B cell (primary cell): ENCODE measurements at regions of chr15 and their contacts with region 1.

Region 1: DNA sequence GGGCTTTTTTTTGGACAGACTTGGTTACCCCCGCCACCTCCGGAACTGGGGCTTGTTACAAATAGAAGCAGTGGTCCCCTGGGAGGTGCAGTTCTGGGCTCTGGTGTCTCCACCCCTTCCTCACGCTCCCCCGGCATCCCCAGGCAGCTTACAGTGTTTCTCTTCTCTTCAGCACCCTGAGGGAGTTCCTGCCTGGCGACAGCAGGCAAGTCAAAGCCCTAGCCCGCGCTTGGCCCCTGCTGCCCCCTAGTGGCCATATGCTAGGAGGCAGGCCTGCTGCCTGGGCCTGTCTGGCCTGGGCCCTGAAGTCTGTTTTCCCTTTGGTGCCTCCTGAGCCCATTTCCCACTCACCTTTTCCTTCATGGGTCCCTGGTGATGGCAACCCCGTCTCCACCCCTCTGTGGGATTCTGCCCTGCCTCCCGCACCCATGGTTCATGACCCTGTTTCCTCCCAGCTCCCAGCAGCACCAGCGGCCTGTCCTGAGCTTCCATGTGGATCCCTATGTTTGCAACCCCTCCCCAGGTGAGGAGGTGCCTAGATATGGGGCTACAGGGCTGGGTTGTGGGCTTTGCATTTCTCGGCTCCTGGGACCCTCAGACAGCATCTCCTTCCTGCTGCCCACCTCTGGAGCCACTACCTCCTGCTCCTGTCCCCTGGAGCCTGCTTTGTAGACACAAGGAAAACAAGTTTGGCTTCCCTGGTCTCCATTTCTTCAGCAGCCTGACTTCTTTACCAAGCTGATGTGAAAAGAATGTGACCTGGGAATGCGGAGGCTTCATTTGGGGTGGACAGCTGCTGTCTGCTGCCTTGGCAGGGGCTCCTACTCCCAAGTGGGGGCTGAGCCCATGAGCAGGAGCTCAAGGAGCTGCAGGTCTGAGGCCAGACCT is 2.2 kb downstream of the SNX22 start:
- DNase-seq: peak; percentile 97
- ATAC-seq: peak; percentile 82
- H3K4me3 ChIP-seq: peak overlapping the region in 4 of 5 experiments; percentile 91 to 96 (median 94)
- H3K4me3 Mint-ChIP-seq: peak overlapping the region; percentile 90
- H3K27ac ChIP-seq: peak overlapping the region; percentile 79 to 83
- H3K27ac Mint-ChIP-seq: peak overlapping the region; percentile 94
- H3K4me1 ChIP-seq: peaks cover 34 to 67% of the 10 kb centered on the region in 2 donors
- H3K4me1 Mint-ChIP-seq: peaks cover 76% of the 10 kb centered on the region
- H3K27me3 ChIP-seq: no peaks in the 10 kb centered on the region
- H3K27me3 Mint-ChIP-seq: no peaks in the 10 kb centered on the region
- CTCF ChIP-seq: peak; percentile 92

Region 2: GRCh38 chr15:63833021-63833696 is 320.6 kb before region 1 on chr15:
- CTCF ChIA-PET with region 1: no interaction called
- POLR2A ChIA-PET with region 1: no interaction called
- intact Hi-C with region 1: loop called (anchors 5 kb)
- DNase-seq: no peak
- ATAC-seq: peak; percentile 39
- H3K4me3 ChIP-seq: peak overlapping the region; percentile 83 to 95 (median 93)
- H3K4me3 Mint-ChIP-seq: peak overlapping the region; percentile 91
- H3K27ac ChIP-seq: peak overlapping the region; percentile 90
- H3K27ac Mint-ChIP-seq: peak overlapping the region; percentile 87
- H3K4me1 ChIP-seq: peaks cover 22 to 27% of the 10 kb centered on the region in 2 donors
- H3K4me1 Mint-ChIP-seq: peaks cover 39% of the 10 kb centered on the region
- H3K27me3 ChIP-seq: no peaks in the 10 kb centered on the region
- H3K27me3 Mint-ChIP-seq: no peaks in the 10 kb centered on the region
- CTCF ChIP-seq: no peak

Region 3: DNA sequence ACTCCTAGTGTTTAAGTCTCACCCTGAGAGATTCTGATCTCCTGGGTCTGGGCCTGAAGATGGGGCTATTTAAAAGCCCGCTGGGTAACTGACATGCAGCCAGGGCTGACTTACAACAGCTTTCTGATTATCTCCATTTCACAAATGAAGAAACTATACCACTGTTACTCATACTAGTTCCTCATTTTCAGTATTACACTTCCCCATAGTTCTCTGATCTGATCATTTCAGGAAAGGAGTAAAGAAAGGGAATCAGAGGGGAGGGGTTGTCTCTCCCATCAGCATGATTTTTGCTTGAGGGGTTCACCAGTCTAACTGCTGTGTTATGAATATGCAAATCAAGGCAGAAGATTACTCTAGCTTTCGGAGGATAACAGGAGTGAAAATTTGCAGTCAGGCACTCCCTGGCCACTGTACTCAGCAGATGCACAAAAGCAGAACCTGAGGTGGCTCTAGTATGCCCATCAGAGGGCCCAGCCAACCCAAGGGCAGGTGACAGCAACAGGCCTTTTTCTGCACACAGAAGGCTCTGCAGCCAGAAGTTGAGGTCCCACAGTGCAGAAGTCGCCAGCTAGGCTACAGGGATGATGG is 166.9 kb before region 1 on chr15:
- CTCF ChIA-PET with region 1: no interaction called
- POLR2A ChIA-PET with region 1: no interaction called
- intact Hi-C with region 1: no loop called
- DNase-seq: peak; percentile 79
- ATAC-seq: peak; percentile 90
- H3K4me3 ChIP-seq: no peak overlapping the region
- H3K4me3 Mint-ChIP-seq: peak overlapping the region; percentile 70
- H3K27ac ChIP-seq: peak overlapping the region; percentile 57 to 63
- H3K27ac Mint-ChIP-seq: peak overlapping the region; percentile 96
- H3K4me1 ChIP-seq: peaks cover 46 to 56% of the 10 kb centered on the region in 2 donors
- H3K4me1 Mint-ChIP-seq: peaks cover 62% of the 10 kb centered on the region
- H3K27me3 ChIP-seq: no peaks in the 10 kb centered on the region
- H3K27me3 Mint-ChIP-seq: no peaks in the 10 kb centered on the region
- CTCF ChIP-seq: no peak

Region 4: GRCh38 chr15:64137226-64138220 is 16.2 kb before region 1 on chr15:
- CTCF ChIA-PET with region 1: interaction called, 62 read pairs
- POLR2A ChIA-PET with region 1: interaction called, 8 read pairs
- intact Hi-C with region 1: loop called (anchors 1 kb)
- DNase-seq: peak; percentile 80
- ATAC-seq: peak; percentile 95
- H3K4me3 ChIP-seq: no peak overlapping the region
- H3K4me3 Mint-ChIP-seq: no peak overlapping the region
- H3K27ac ChIP-seq: peak overlapping the region in 1 of 2 donors; percentile 53
- H3K27ac Mint-ChIP-seq: peak overlapping the region; percentile 83
- H3K4me1 ChIP-seq: peaks cover 8 to 17% of the 10 kb centered on the region in 2 donors
- H3K4me1 Mint-ChIP-seq: peaks cover 19% of the 10 kb centered on the region
- H3K27me3 ChIP-seq: no peaks in the 10 kb centered on the region
- H3K27me3 Mint-ChIP-seq: no peaks in the 10 kb centered on the region
- CTCF ChIP-seq: peak; percentile 26

Region 5: DNA sequence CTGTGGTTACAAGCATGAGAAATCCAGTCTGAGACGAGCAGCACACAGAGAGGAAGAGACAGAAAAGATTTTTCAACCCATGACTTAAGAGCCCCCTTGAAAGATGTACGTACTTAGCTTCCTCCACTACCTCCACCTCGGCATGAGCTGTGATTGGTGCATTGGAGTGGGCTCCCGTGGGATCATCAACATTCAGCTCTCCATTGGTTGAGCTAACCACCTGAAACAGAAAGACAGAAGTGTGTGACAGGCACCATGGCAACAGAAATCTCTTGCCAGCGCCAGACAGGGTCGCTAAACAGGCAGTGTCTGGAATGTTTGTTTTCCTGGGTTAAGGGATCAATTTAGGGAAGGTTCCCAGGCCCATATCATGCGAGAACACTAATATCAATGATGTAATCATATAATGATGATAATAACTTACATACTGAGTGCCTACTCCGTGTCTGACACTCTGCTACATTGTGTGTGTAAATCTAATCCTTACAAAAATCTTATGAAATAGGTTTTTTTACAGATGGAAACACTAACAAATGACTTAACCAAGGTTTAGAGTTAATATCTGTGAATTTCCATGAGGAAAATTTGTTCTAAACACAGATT is 26.6 kb after region 1 on chr15:
- CTCF ChIA-PET with region 1: interaction called, 9 read pairs
- POLR2A ChIA-PET with region 1: interaction called, 3 read pairs
- intact Hi-C with region 1: loop called (anchors 1 kb)
- DNase-seq: peak; percentile 91
- ATAC-seq: peak; percentile 99
- H3K4me3 ChIP-seq: peak overlapping the region in 3 of 5 experiments; percentile 16 to 33 (median 31)
- H3K4me3 Mint-ChIP-seq: peak overlapping the region; percentile 74
- H3K27ac ChIP-seq: peak overlapping the region; percentile 72 to 94
- H3K27ac Mint-ChIP-seq: peak overlapping the region; percentile 86
- H3K4me1 ChIP-seq: peaks cover 23 to 24% of the 10 kb centered on the region in 2 donors
- H3K4me1 Mint-ChIP-seq: peaks cover 25% of the 10 kb centered on the region
- H3K27me3 ChIP-seq: no peaks in the 10 kb centered on the region
- H3K27me3 Mint-ChIP-seq: no peaks in the 10 kb centered on the region
- CTCF ChIP-seq: no peak

Region 6: DNA sequence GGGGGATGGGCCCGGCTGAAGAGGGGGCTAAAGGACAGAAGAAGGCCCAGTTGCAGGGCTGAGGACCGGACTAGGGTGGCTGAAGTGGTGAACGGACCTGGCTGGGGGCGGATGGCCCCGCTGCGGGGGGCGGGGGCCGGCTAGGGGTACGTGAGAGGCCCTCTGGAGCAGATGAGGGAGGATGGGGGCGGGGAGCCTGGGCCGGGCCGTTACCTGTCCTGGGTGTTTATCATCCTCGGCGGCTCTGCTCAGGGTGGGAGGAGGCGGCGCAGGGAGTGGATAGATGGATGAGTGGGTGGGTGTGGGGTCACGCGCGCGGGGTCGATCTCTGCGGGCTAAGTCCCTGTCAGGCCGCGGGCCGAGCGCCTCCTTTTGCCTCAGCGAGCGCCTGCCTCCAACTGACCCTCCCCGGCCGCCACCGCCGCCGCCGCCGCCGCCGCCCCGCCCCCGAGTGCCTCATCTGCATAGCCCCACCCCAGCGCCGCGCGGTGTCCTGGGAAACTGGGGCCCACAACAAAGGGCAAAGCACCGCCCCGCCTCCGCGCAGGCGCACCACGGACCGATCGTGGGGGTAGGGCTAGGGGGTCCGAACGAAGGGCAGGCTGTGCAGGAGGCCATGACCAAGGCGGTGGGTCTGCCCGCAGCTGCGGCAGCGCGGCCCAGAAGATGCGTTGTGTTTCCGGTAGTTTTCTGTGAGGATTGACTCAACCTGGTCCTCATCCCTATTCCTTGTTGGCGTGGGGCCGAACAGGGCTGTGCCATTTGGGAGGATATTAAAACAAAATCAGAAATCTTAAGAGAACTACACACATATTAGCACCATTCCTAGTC is 549.3 kb after region 1 on chr15:
- CTCF ChIA-PET with region 1: no interaction called
- POLR2A ChIA-PET with region 1: no interaction called
- intact Hi-C with region 1: loop called (anchors 2 kb)
- DNase-seq: peak; percentile 93
- ATAC-seq: peak; percentile 96
- H3K4me3 ChIP-seq: peak overlapping the region; percentile 73 to 88 (median 87)
- H3K4me3 Mint-ChIP-seq: peak overlapping the region; percentile 95
- H3K27ac ChIP-seq: peak overlapping the region; percentile 65 to 83
- H3K27ac Mint-ChIP-seq: peak overlapping the region; percentile 94
- H3K4me1 ChIP-seq: peaks cover 45 to 46% of the 10 kb centered on the region in 2 donors
- H3K4me1 Mint-ChIP-seq: peaks cover 56% of the 10 kb centered on the region
- H3K27me3 ChIP-seq: no peaks in the 10 kb centered on the region
- H3K27me3 Mint-ChIP-seq: no peaks in the 10 kb centered on the region
- CTCF ChIP-seq: no peak